Lower leg skin (tissue), 4 donors: ENCODE measurements at regions of chr16 and their contacts with region 1.

Region 1: GRCh38 chr16:88719267-88719932 is 13.1 kb downstream of the CTU2 start:
- DNase-seq: no peak
- H3K4me3 ChIP-seq: no peak overlapping the region
- CTCF ChIP-seq: no peak
- POLR2A ChIP-seq: no peak

Region 2: DNA sequence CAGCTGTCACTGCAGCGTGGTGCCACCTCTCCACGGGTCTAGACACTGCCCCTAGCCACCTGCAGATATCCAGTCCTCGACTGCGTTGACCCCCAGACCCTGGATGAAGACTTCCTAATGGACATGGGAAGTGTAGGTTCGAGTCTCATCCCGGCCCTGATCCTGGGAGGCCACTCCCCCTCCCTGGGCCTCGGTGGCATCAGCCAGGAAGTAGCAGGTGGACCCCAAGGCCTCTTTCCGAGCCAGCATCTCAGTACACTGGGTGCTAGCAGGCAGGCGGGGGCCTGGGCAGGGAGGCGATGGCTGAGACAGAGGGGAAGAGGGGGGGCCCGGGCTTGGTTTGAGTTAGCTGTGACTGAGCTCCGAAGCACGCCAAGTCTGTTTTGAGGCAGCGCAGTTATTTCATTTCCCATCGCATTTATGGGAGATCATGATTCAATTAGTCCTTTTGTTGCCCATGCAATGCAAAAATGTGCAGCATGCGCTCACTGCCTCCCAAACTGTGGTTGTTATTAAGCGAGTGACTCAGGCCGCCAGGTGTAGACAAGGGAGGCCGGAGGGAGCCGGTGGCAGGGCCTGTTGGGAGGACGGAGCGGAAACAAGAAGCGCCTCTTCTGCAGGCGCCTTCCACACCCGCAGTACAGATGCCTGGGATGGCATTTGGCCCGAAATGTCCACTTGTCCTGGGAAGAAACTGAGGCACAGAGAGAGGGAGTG is 361.9 kb before region 1 on chr16:
- intact Hi-C with region 1: no loop called
- DNase-seq: no peak
- H3K4me3 ChIP-seq: no peak overlapping the region
- CTCF ChIP-seq: no peak
- POLR2A ChIP-seq: no peak

Region 3: GRCh38 chr16:88669980-88670379 is 49.4 kb before region 1 on chr16:
- intact Hi-C with region 1: loop called (anchors 1 kb)
- DNase-seq: no peak
- H3K4me3 ChIP-seq: no peak overlapping the region
- CTCF ChIP-seq: no peak
- POLR2A ChIP-seq: no peak

Region 4: GRCh38 chr16:88882358-88883030 is 163.1 kb after region 1 on chr16:
- intact Hi-C with region 1: no loop called
- DNase-seq: peak; percentile 53 to 90
- H3K4me3 ChIP-seq: no peak overlapping the region
- CTCF ChIP-seq: peak in 1 of 3 donors; percentile 26
- POLR2A ChIP-seq: no peak